ENCODE measurements at regions of chr19 and their contacts with region 1.

Region 1: DNA sequence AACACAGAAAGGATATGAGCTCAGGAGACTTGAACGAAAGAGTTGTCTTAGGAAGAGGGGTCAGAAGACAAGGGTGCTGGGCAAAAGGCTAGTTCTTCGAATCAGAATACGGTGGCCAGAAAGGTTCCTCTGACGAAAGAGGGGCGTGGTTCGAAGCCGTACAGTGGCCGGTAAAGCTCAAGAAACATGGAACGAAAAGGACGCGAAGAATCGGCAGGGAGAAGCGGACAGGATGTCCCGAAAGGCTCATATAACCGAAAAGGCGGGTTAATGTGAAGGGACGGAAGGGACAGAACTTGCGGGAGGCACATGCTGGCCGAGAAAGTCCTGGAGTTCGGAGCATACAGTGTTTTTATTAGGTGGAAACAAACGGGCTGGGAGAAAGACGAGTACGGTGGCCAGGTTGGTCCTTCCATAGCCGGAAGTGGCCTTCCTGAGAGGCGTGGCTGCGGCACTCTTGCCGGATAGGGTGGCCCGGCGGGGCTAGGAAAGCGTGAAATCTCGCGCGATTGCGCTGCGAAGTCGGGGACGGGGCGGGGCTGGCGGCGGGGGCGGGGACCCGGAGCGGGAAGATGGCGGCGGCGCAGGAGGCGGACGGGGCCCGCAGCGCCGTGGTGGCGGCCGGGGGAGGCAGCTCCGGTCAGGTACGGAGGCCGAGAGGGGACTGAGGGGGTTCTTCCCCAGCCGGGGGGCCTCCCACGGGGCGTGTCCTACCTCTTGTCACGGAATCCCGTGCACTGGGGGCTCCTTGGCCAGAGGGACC is at the start of gene CLPTM1:
- DNase-seq: peak; percentile 95 to 98
- H3K4me3 ChIP-seq: peak within 1 kb of the TSS; percentile 94 to 99
- H3K27ac ChIP-seq: peak within 1 kb of the TSS; percentile 87 to 95
- H3K4me1 ChIP-seq: peaks cover 0 to 72% (median 44%) of the 10 kb centered on the region in 4 donors
- H3K27me3 ChIP-seq: peaks cover 0 to 4% of the 10 kb centered on the region in 2 donors
- CTCF ChIP-seq: peak in 1 of 2 experiments; percentile 28

Region 2: DNA sequence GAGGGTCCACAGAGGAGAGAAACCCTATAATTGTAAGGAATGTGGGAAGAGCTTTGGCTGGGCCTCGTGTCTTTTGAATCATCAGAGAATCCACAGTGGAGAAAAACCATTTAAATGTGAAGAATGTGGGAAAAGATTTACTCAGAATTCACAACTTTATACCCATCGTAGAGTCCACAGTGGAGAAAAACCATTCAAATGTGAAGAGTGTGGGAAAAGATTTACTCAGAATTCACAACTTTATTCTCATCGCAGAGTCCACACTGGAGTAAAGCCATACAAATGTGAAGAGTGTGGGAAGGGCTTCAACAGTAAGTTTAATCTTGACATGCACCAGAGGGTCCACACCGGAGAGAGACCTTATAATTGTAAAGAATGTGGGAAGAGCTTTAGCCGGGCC is 823.0 kb before region 1 on chr19:
- intact Hi-C with region 1: no loop called
- DNase-seq: no peak
- H3K4me3 ChIP-seq: no peak overlapping the region
- H3K27ac ChIP-seq: no peak overlapping the region
- H3K4me1 ChIP-seq: no peaks in the 10 kb centered on the region
- H3K27me3 ChIP-seq: no peaks in the 10 kb centered on the region
- CTCF ChIP-seq: no peak

Region 3: DNA sequence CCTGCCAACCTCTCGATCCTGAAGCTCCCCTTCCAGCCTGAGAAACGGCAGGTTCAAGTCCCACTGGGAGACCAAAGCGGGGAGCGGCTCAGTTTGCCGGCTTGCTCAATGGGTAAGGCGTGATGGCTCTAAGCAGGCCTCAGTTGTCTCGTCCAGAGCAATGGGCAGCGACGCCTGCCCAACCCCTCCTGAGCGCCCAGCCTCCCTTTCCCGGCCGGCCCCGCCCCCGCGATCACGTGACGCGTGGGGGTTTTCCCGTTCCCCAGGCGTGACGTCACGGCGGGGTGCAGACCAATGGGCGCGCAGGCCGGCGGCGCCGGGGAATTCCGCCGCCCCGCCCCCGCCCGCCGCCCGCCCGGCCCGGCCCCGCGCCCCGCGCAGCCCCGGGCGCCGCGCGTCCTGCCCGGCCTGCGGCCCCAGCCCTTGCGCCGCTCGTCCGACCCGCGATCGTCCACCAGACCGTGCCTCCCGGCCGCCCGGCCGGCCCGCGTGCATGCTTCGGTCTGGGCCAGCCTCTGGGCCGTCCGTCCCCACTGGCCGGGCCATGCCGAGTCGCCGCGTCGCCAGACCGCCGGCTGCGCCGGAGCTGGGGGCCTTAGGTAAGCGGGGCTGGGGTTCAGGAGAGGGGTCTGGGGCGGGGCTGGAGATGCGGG is 46.2 kb after region 1 on chr19 and contains the start of gene RELB:
- intact Hi-C with region 1: loop called (anchors 5 kb)
- DNase-seq: peak; percentile 90 to 97
- H3K4me3 ChIP-seq: peak within 1 kb of the TSS; percentile 81 to 97
- H3K27ac ChIP-seq: peak within 1 kb of the TSS; percentile 95 to 97
- H3K4me1 ChIP-seq: peaks cover 0 to 12% (median 8%) of the 10 kb centered on the region in 4 donors
- H3K27me3 ChIP-seq: no peaks in the 10 kb centered on the region
- CTCF ChIP-seq: no peak

Measured in tibial artery (tissue), 4 donors.